ENCODE measurements at regions of chr3 and their contacts with region 1.

Region 1: DNA sequence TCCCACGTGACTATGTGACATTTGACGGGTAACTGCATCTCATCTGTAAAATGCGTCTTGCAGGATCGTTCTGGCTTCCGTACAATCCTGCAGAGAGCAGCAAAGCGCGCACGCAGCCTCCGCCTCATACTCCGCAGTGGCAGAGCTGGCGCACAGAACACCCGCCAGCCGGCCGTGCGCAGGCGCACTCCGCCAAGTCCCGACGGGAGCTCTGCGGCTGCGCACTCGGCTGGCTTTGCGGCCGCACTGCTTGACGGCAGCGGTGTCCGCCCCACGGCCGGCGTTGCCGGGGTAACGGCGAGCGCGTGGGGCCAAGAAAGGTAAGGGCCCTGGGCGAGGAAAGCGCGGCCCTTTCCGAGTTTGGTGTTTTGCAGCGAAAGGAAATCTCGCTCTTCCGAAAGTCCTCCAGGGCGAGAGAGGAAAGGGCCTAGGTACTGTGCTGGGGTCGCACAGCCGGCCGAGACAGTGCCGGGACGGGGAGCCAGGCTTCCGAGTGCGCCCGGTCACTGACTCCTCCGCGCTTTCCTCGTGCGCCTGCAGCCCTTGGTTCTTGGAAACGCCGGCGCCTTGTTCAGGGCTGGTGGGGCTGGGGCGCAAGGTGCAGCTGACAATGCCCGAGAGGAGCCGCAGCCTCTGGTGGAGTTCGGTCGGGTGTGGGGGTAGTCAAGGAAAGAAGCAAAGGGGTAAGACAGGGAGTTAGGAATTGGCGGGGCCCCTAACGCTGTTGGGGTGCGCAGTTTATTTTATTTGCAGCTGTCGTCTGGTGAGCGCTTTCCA is at the start of gene TSEN2:
- DNase-seq: peak; percentile 88
- ATAC-seq: peak; percentile 96
- H3K4me3 ChIP-seq: peak within 1 kb of the TSS; percentile 95
- H3K27ac ChIP-seq: peak within 1 kb of the TSS; percentile 69
- H3K4me1 ChIP-seq: peaks cover 5% of the 10 kb centered on the region; the same call in 1 of the 2 replicates
- H3K27me3 ChIP-seq: no peaks in the 10 kb centered on the region
- CTCF ChIP-seq: peak in 1 of 3 experiments; percentile 65; a peak in 2 of 6 replicates
- EP300 ChIP-seq: no peak
- POLR2A ChIP-seq: peak; percentile 92
- RAD21 ChIP-seq: peak; percentile 38; the same call in 1 of the 2 replicates
- polyA plus RNA-seq, gene TSEN2: 24.5 TPM

Region 2: DNA sequence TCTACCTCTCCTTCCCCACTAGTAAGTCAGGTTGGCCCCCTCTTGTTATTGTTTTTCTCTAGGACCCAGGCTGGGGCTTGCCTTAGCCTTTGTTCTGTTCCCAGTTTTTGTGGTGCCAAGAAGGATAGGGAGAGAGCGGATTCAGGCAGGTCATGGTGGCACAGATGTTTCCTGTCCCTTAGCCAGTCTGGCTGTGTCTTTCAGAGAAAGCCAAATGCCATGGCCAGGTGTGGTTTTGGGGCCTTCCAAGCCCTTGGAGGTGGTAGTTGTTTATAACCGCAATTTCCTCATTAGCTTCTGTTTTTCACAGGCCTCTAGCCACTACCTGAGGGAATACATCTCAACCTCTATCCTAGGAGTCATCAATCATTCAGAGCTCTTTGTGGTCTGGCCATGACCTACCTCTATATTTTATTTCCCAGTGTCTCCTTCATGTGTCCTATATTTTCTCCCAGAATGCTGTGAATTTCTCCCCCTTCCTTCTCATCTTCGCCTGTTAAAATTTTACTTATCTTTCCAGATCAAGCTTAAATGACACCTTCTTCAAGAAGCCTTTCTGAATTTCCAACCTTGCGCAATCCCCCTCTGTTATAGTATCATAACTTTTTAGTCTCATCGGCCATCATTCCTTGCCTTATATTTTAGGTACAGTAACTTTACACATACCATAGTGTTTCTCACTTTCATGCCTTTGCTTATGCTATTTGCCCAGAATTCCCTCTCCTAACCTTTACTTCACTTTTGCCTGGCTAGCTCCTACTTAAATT is 363.8 kb before region 1 on chr3:
- CTCF ChIA-PET with region 1: interaction called, 11 read pairs
- POLR2A ChIA-PET with region 1: no interaction called
- RAD21 ChIA-PET with region 1: no interaction called
- SMC1A ChIA-PET with region 1: interaction called, 4 read pairs
- in situ Hi-C with region 1: no loop called
- intact Hi-C with region 1: no loop called
- DNase-seq: no peak
- ATAC-seq: peak; percentile 14; the same call in 2 of the 3 replicates
- H3K4me3 ChIP-seq: no peak overlapping the region
- H3K27ac ChIP-seq: no peak overlapping the region
- H3K4me1 ChIP-seq: no peaks in the 10 kb centered on the region
- H3K27me3 ChIP-seq: 0 out of 4 replicates have a peak, but pooled peaks cover 0 to 6% of the 10 kb centered on the region in 2 experiments
- CTCF ChIP-seq: no peak
- EP300 ChIP-seq: no peak
- POLR2A ChIP-seq: no peak
- RAD21 ChIP-seq: no peak

Region 3: DNA sequence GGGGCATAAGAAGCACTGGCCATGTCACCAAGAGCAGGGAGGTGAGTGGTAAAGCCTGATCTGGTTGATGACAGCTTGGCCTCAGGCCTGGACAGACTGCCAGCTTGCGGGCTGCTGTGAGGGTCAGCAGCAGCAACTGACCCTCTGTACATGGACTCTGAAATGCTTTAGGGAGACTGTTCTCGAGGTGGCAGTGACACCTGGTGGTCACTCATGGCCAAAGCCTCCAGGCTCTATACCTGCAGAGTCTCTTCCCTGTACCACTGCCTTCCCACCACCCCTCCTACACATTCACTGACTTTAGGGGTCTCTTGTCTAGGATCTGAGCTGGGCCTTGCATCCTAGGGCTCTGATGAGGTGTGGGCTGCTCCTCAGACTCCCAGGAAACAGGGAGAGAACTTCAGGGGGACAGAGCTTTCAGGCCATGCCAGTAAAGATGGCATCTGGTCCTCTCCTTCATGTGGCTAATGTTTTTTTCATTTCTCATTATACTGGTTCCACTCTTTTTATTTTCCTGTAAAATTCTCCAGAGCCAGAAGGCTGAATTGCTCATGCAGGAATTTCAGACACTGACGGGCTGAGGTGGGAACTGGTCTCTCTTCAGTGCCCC is 308.4 kb before region 1 on chr3:
- CTCF ChIA-PET with region 1: interaction called, 44 read pairs
- POLR2A ChIA-PET with region 1: interaction called, 3 read pairs
- RAD21 ChIA-PET with region 1: interaction called, 42 read pairs
- SMC1A ChIA-PET with region 1: interaction called, 31 read pairs
- in situ Hi-C with region 1: no loop called
- intact Hi-C with region 1: loop called (anchors 2 kb)
- DNase-seq: no peak
- ATAC-seq: peak; percentile 100
- H3K4me3 ChIP-seq: no peak overlapping the region
- H3K27ac ChIP-seq: no peak overlapping the region
- H3K4me1 ChIP-seq: no peaks in the 10 kb centered on the region; the same call in 1 of the 2 replicates
- H3K27me3 ChIP-seq: no peaks in the 10 kb centered on the region
- CTCF ChIP-seq: peak; percentile 72 to 83 (median 82)
- EP300 ChIP-seq: no peak
- POLR2A ChIP-seq: no peak
- RAD21 ChIP-seq: peak; percentile 72

Region 4: DNA sequence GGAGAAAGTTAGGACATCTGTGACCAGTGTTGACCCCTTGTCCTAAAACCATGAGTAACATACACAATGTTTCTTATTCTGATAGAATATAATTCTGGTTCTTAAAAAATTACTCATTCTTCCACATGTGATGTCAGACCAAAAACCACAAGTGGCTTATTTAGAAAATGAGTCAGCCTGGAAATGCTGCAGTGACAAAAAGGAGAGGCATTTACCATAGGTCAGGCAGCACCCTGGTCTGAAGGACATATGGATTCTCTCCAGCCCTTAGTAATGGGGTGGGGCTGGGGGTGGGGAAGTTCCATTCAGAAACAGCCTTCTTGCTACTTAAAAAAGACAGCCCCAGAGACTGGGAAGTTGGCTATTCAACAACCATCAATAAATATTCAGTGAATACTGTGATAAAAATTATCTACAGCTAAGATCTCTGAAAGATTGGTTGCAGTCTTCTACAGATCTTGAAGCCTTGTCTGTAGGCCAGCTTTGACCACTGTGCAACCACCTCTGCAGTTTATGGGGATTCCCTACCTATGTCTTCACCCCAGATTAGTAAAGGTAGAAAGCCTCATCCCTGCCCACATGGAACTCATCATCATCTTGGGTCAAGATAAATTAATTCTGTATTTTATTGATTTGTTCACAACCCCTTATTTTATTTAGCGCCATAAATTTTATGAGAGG is 290.8 kb before region 1 on chr3:
- CTCF ChIA-PET with region 1: interaction called, 17 read pairs
- POLR2A ChIA-PET with region 1: interaction called, 3 read pairs
- RAD21 ChIA-PET with region 1: interaction called, 17 read pairs
- SMC1A ChIA-PET with region 1: interaction called, 19 read pairs
- in situ Hi-C with region 1: no loop called
- intact Hi-C with region 1: loop called (anchors 5 kb)
- DNase-seq: peak; percentile 75
- ATAC-seq: peak; percentile 83
- H3K4me3 ChIP-seq: no peak overlapping the region
- H3K27ac ChIP-seq: peak overlapping the region; percentile 79
- H3K4me1 ChIP-seq: peaks cover 48% of the 10 kb centered on the region
- H3K27me3 ChIP-seq: no peaks in the 10 kb centered on the region
- CTCF ChIP-seq: no peak
- EP300 ChIP-seq: peak; percentile 85 to 91
- POLR2A ChIP-seq: no peak
- RAD21 ChIP-seq: no peak

Region 5: DNA sequence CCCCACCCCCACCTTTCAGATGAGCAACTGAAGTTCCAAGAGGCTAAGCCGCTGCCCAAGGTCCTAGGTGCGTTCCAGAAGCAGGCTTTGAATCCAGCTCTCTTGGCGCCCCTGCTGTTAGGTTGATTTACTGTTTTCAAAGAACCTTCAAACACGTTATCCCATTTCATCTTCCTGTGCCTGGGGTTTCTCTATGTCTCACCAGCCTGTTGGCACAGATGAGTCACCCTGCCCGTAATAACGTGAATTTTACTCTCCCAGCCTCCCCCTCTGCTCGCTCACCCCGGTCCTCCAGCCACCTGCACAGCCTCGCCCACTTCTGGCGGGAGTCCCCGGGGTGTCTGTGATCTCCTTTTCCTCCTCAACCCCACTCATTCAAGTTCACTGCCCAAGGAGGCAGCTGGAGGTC is 13.1 kb before region 1 on chr3:
- CTCF ChIA-PET with region 1: interaction called, 10 read pairs
- POLR2A ChIA-PET with region 1: no interaction called
- RAD21 ChIA-PET with region 1: no interaction called
- SMC1A ChIA-PET with region 1: interaction called, 8 read pairs
- in situ Hi-C with region 1: no loop called
- intact Hi-C with region 1: no loop called
- DNase-seq: no peak
- ATAC-seq: peak; percentile 72
- H3K4me3 ChIP-seq: no peak overlapping the region
- H3K27ac ChIP-seq: no peak overlapping the region
- H3K4me1 ChIP-seq: no peaks in the 10 kb centered on the region
- H3K27me3 ChIP-seq: 0 out of 4 replicates have a peak, but pooled peaks cover 0 to 2% of the 10 kb centered on the region in 2 experiments
- CTCF ChIP-seq: 0 out of 6 replicates have a peak, but pooled peaks of 1 of the 3 experiments have one; percentile 1
- EP300 ChIP-seq: no peak
- POLR2A ChIP-seq: no peak
- RAD21 ChIP-seq: no peak

Region 6: GRCh38 chr3:12556671-12557472 is 72.5 kb after region 1 on chr3 and contains the start of gene MKRN2:
- CTCF ChIA-PET with region 1: interaction called, 7 read pairs
- POLR2A ChIA-PET with region 1: interaction called, 7 read pairs
- RAD21 ChIA-PET with region 1: interaction called, 3 read pairs
- SMC1A ChIA-PET with region 1: interaction called, 3 read pairs
- in situ Hi-C with region 1: no loop called
- intact Hi-C with region 1: loop called (anchors 2 kb)
- DNase-seq: peak; percentile 33
- ATAC-seq: peak; percentile 89
- H3K4me3 ChIP-seq: peak within 1 kb of the TSS; percentile 95
- H3K27ac ChIP-seq: peak within 1 kb of the TSS; percentile 89
- H3K4me1 ChIP-seq: peaks cover 22% of the 10 kb centered on the region
- H3K27me3 ChIP-seq: no peaks in the 10 kb centered on the region
- CTCF ChIP-seq: no peak
- EP300 ChIP-seq: no peak
- POLR2A ChIP-seq: peak; percentile 99
- RAD21 ChIP-seq: no peak
- polyA plus RNA-seq, gene MKRN2: 15.4 to 21.8 TPM

Measured in GM12878 (cell line).